ENCODE measurements at regions of chr1 and their contacts with region 1.

Region 1: GRCh38 chr1:23777979-23778814 is at the start of gene PITHD1:
- DNase-seq: peak; percentile 80
- H3K4me3 Mint-ChIP-seq: peak within 1 kb of the TSS; percentile 95
- H3K27ac Mint-ChIP-seq: peak within 1 kb of the TSS; percentile 94
- H3K4me1 Mint-ChIP-seq: peaks cover 43% of the 10 kb centered on the region
- H3K27me3 Mint-ChIP-seq: no peaks in the 10 kb centered on the region
- total RNA-seq, gene PITHD1: 83.2 and 83.4 TPM in 2 replicates

Region 2: GRCh38 chr1:23743287-23744052 is 34.7 kb before region 1 on chr1 and contains the start of gene ELOA:
- intact Hi-C with region 1: loop called (anchors 5 kb)
- DNase-seq: peak; percentile 77
- H3K4me3 Mint-ChIP-seq: peak within 1 kb of the TSS; percentile 95
- H3K27ac Mint-ChIP-seq: peak within 1 kb of the TSS; percentile 88
- H3K4me1 Mint-ChIP-seq: peaks cover 47% of the 10 kb centered on the region
- H3K27me3 Mint-ChIP-seq: peaks cover 2% of the 10 kb centered on the region
- total RNA-seq, gene ELOA: 54.5 and 55.2 TPM in 2 replicates

Region 3: DNA sequence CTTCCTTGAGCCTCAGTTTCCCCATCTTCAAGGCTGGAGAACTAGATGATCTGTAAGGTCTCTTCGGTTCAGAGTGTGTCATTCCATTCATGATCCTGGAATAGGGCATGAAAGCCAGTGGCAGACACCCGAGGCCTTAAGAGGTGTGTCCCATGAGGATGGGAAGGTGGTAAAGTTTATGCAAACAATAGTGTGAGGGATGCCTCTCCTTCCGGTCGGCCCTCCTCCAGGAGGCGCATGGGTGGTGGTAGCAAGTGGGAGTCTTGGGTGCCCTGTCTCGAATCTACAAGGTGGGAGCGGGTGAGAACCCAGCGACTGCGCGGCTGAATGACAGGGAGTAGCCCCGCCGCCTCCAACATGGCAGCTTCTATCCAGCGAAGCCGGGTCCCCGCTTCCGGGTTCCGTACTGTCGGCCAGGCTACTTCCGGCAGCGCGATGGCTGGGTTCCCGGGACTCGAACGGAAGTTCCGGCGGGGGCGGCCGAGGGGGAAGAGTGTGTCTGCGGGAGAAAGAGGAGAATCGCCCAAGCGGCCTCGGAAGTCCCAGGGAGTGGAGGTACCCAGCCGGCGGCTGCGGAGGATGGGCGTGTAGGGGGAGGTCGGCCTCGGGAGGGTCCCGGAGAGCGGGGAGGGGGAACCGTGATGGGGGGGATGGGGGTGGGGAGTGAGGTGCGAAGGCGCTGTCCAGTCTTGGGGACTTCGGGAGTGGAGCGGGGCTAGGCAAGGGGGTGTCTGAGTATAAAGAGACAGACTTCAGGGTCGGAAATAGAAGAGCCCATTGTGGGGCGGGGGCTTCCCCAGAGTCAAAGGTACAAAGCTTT is 12.7 kb after region 1 on chr1 and contains the start of gene LYPLA2:
- intact Hi-C with region 1: loop called (anchors 1 kb)
- DNase-seq: peak; percentile 85
- H3K4me3 Mint-ChIP-seq: peak within 1 kb of the TSS; percentile 100
- H3K27ac Mint-ChIP-seq: peak within 1 kb of the TSS; percentile 94
- H3K4me1 Mint-ChIP-seq: peaks cover 16% of the 10 kb centered on the region
- H3K27me3 Mint-ChIP-seq: no peaks in the 10 kb centered on the region
- total RNA-seq, gene LYPLA2: 91.4 and 96.1 TPM in 2 replicates

Region 4: DNA sequence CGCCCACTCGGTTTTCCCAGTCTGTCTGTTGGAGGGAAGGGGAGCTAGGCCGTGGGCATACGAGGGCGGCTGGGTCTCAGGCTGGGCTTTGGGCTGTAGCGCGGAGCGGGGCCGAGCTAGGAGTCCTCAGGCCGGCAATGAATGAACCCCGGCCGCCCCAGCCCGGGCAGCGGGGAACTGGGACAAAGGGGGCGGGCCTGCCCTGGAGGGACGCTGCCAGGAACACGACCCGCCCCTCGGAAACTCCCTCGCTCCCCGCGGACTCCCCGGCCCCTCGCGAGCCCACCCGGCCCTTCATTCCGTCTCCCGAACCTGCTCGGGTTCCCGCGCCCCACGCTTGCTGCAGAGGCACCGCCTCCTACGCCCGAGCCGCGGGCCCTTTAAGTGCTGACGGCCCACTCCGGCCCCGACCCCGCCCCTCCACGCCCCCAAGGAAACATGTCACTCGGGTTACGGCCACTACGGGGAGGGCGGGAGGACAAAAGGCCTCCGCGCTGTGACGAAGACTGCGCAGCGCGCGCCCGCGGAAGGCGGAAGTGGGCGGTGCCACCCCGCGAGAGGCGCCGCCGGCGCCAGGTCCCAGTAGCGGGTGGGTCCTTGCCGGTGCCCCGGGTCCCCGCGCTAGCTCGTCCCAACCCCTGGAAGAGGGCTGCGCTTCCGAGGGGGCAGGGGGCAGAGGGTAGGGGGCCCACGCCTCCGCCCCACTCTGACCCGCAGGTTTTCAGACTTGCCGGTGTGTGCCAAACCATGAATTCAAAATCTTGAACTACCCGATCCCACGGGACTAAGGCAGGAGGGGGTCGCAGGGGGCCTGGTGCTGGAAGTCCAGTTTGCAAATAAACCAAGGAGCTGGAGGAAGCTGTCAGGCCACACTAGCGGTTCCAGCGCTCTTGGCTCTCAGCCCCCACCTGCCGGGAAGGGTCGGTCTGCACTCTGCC is 22.5 kb after region 1 on chr1 and contains the start of gene GALE:
- intact Hi-C with region 1: loop called (anchors 1 kb)
- DNase-seq: peak; percentile 93
- H3K4me3 Mint-ChIP-seq: peak within 1 kb of the TSS; percentile 97
- H3K27ac Mint-ChIP-seq: peak within 1 kb of the TSS; percentile 88
- H3K4me1 Mint-ChIP-seq: peaks cover 13% of the 10 kb centered on the region
- H3K27me3 Mint-ChIP-seq: peaks cover 2% of the 10 kb centered on the region
- total RNA-seq, gene GALE: 62.4 and 63.4 TPM in 2 replicates

Region 5: GRCh38 chr1:23825076-23825761 is 47.0 kb after region 1 on chr1 and contains the start of gene HMGCL:
- intact Hi-C with region 1: loop called (anchors 1 kb)
- DNase-seq: peak; percentile 81
- H3K4me3 Mint-ChIP-seq: peak within 1 kb of the TSS; percentile 94
- H3K27ac Mint-ChIP-seq: peak within 1 kb of the TSS; percentile 89
- H3K4me1 Mint-ChIP-seq: peaks cover 15% of the 10 kb centered on the region
- H3K27me3 Mint-ChIP-seq: no peaks in the 10 kb centered on the region
- total RNA-seq, gene HMGCL: 18.5 and 19.9 TPM in 2 replicates